Common myeloid progenitor, CD34-positive (primary cell): ENCODE measurements at regions of chr4 and their contacts with region 1.

Region 1: DNA sequence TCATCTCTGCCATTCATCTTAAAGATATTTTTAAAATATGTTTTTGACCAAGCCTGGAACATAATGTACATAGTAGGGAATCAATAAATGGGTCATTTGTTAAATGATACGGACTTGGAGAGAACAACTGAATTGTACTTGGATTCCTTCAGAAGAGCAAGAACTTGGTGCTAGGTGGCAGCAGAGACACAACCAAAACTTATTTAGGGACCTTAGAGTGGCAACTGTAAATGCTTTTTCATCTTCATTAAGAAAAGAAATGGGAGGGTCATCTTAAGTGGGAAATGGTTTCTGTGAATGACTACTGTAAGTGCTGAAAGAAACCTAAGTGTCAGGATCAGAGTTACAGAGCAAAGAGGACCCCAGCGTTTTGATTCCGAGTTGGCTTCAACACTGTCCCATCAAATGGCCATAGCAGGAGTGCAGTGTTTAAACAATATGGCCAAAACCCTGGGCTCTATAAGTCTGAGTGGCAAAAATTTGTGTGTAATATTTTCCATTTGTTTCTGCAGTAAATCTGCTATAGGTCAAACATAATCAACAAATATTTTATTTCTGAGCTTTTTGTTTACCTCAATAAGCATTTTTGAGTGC is 213.6 kb downstream of the PALLD start:
- DNase-seq: peak; percentile 65 to 84 (median 83)
- H3K4me3 ChIP-seq: no peak overlapping the region
- H3K27ac ChIP-seq: no peak overlapping the region
- H3K4me1 ChIP-seq: peaks cover 0 to 16% (median 8%) of the 10 kb centered on the region in 4 experiments
- H3K27me3 ChIP-seq: no peaks in the 10 kb centered on the region

Region 2: GRCh38 chr4:168335621-168336020 is 374.8 kb before region 1 on chr4:
- CTCF ChIA-PET with region 1: no interaction called
- POLR2A ChIA-PET with region 1: no interaction called
- DNase-seq: no peak
- H3K4me3 ChIP-seq: no peak overlapping the region
- H3K27ac ChIP-seq: no peak overlapping the region
- H3K4me1 ChIP-seq: no peaks in the 10 kb centered on the region
- H3K27me3 ChIP-seq: no peaks in the 10 kb centered on the region

Region 3: DNA sequence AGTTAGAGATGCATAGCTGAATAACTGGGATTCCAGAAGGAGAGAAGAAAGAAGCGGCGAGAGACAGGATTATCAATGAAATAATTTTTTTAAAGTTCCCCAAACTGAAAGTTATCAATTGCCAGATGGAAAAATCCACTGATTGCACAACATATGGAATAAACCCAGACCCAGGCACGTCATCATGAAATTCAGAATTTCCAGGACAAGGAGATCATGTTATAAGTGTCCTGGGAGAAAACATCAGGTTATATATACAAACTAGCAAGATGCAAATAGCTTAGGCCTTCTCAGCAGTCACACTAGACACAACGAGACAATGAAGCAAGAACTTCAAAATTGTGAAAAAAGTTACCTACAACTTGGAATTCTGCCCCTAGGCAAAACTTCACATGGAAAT is 13.6 kb before region 1 on chr4:
- CTCF ChIA-PET with region 1: interaction called, 10 read pairs
- POLR2A ChIA-PET with region 1: no interaction called
- DNase-seq: no peak
- H3K4me3 ChIP-seq: no peak overlapping the region
- H3K27ac ChIP-seq: no peak overlapping the region
- H3K4me1 ChIP-seq: peaks cover 0 to 7% (median 0%) of the 10 kb centered on the region in 4 experiments
- H3K27me3 ChIP-seq: no peaks in the 10 kb centered on the region

Region 4: GRCh38 chr4:168722391-168722790 is 11.9 kb after region 1 on chr4:
- CTCF ChIA-PET with region 1: interaction called, 13 read pairs
- POLR2A ChIA-PET with region 1: no interaction called
- DNase-seq: peak in 1 of 3 donors; percentile 20
- H3K4me3 ChIP-seq: no peak overlapping the region
- H3K27ac ChIP-seq: no peak overlapping the region
- H3K4me1 ChIP-seq: peaks cover 7 to 10% (median 9%) of the 10 kb centered on the region in 4 experiments
- H3K27me3 ChIP-seq: no peaks in the 10 kb centered on the region